AG04450 (cell line): ENCODE measurements at regions of chr17 and their contacts with region 1.

Region 1: GRCh38 chr17:74659898-74660297 is 36.4 kb upstream of the CD300E start:
- DNase-seq: no peak
- H3K4me3 ChIP-seq: no peak overlapping the region
- H3K27ac ChIP-seq: no peak overlapping the region
- H3K27me3 ChIP-seq: no peaks in the 10 kb centered on the region
- CTCF ChIP-seq: no peak

Region 2: DNA sequence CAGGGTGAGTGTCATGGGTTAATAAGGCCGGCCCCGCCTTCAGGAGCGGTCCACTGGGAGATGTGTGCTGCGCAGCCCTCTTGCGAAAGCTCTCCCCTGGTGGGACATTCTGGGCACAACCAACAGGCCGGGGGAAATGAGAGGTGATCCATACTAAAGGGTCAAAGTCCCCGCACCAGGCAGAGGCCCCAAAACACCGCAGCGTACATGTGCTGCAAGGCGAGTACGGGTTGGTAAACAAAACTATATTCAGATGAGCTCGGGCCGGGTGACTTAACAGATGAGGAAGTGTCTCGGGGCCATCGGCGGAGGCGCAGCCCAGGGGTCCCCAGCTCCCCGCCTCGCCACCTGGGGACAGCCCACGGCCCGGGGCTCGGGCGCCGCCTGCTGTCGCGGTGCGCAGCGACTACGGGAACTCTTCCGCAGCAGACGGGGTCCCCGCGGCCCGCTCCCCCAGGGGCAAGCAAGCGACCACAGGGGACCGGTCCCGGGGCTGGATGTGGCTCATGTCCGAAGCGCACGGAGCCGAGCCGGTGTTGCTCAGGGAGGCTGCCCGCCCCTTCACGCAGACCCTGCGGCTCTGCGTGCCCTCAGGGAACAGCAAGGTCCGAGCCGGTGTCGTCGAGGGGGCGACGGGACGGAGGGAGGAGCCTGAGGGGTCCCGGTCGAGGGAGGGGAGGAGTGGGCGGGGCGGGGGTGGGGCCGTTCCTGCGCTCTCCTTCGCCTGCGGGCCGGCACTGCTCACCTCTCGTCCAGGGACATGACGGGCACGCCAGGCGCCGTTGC is 76.8 kb after region 1 on chr17 and contains the start of gene RAB37:
- CTCF ChIA-PET with region 1: interaction called, 28 read pairs
- POLR2A ChIA-PET with region 1: no interaction called
- DNase-seq: no peak
- H3K4me3 ChIP-seq: no peak within 1 kb of the TSS
- H3K27ac ChIP-seq: no peak within 1 kb of the TSS
- H3K27me3 ChIP-seq: peaks cover 43% of the 10 kb centered on the region
- CTCF ChIP-seq: no peak
- polyA plus RNA-seq, gene RAB37: 0.16 and 0.21 TPM in 2 replicates